HEK293T (cell line): ENCODE measurements at regions of chr19 and their contacts with region 1.

Region 1: GRCh38 chr19:39435499-39436349 is at the start of gene RPS16:
- DNase-seq: peak; percentile 96

Region 2: DNA sequence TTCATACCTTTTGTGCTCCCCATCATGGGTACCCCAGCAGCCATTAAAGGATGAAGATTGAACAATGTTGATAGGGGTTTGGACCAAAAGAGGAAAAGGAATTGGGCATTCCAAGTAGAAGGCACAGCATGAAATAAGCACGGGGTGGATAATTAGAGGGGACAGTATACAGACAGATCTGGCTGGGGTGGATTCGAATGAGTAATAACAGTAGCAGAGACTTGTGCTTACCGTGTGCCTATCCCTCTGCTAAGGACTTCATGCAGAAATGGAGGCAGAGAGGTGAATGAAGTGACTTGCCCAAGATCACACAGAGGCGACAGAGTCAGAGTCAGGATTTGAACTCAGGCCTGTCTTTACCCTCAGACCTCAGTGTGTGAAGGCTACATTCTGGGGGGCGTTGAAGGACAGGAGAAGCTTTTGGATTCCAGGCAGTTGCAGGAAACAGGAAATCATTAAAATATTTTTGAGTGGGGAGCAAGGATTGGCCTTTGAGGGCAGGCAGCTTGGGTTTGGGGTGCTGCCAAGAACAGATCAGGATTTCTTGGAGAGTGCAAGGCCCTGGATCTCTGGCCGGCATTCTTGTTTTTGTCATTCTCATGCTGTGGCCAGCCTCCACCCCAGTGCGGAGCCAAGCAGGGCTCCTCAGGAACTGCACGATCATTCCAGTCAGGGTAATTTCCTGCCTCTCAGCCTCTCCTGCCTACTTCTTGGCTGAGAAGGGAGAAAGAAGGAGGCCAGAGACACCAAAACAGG is 63.5 kb before region 1 on chr19:
- CTCF ChIA-PET with region 1: no interaction called
- POLR2A ChIA-PET with region 1: no interaction called
- DNase-seq: no peak

Region 3: DNA sequence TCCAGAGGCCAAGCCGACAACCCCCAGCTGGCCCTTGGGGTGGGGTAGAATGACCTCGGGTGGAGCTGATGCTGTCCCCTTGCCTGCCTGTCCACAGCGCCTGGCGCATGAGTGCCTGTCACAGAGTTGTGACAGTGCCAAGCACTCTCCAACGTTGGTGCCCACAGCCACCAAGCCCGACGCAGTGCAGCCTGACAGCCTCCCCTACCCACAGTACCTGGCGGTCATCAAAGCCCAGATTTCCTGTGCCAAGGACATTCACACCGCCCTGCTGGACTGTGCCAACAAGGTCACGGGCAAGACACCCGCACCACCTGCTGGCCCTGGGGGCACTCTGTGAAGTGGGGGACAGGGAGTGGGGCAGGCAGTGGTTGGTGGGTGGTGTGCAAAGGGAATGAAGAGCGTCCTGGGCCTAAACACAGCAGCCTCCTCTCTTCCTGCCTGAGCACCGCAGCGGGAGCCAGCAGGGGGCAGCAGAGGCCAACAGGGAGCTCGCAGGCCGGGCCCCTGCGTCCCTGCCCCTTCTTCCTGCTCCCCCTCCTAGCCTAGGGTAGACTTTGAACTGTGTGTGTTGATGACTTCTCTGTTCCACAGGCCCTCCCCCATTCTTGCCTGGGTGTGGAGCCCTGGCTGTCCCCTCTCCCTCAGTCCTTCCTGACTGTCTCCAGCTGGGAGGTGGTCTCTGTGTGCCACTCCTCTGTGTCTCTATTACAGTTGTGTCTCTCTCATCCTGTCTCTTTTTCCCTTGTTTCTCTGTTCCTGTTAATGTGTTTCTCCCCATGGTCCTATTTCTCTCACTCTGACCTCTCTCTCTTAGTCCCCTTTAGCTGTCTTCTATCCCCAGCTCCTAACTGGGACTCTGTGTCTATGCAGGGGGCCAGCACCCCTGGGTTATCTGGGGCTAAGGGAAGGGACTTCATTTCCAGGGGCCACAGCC is 38.1 kb before region 1 on chr19:
- CTCF ChIA-PET with region 1: interaction called, 3 read pairs
- POLR2A ChIA-PET with region 1: interaction called, 54 read pairs
- DNase-seq: peak; percentile 84

Region 4: DNA sequence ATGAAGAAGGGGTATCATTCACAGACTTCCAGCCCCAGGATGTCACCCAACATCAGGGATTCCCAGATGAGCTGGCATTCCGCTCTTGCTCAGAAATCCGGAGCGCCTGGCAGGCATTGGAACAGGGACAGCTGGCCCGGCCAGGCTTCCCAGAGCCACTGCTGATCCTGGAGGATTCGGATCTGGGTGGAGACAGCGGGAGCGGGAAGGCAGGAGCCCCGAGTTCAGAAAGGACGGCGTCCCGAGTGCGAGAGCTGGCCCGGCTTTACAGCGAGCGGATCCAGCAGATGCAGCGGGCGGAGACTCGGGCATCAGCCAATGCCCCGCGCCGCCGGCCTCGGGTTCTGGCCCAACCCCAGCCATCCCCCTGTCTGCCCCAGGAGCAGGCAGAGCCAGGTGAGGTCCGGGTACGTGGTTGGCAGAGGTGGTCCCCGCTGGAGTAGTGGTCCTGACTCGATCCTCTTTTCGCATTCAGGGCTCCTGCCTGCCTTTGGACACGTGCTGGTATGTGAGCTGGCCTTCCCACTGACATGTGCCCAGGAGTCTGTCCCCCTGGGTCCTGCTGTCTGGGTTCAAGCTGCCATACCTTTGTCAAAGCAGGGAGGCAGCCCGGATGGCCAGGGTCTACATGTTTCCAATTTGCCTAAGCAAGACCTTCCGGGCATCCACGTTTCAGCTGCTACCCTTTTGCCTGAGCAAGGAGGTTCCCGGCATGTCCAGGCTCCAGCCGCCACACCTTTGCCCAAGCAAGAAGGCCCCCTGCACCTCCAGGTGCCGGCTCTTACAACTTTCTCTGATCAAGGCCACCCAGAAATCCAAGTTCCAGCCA is 12.3 kb before region 1 on chr19:
- CTCF ChIA-PET with region 1: interaction called, 5 read pairs
- POLR2A ChIA-PET with region 1: interaction called, 78 read pairs
- DNase-seq: no peak

Region 5: GRCh38 chr19:39480337-39481228 is 44.9 kb after region 1 on chr19 and contains the start of gene TIMM50:
- CTCF ChIA-PET with region 1: no interaction called
- POLR2A ChIA-PET with region 1: interaction called, 12 read pairs
- DNase-seq: peak; percentile 95

Region 6: DNA sequence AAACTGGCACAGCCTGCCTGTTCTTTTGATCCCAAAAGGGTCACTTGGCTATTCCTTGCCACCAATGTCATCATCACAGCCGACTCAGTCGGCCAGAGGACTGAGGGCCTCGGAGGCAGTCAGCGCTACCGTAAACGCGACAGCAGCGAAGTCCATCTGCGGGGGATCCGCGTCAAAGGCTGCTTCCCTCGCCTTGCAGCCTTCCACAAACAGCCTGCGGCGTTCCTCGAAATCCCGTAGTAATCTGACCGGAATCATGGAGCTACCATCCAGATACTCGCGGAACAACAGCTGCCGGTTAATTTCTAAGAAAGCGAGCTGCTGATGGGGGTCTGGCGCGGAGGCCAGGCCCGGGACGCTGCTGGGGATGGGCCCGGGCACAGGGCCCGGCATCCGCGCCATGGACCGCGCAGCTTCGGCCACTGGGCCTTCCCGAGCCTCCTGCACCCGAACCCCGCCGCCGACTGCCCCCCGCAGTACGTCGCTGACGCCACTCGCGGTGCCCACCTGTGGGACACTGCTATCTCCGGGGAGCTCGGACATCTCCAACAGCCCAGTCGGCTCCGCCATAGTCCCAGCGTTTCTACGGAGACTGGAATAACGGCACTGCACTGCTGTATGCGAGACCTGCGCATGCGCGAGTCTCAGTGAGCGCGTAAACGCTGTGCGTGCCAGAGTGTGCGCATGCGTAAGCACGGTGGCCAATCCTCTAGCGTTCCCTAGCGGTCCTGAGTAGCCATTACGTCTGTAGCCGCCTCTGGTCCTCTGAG is 96.7 kb after region 1 on chr19 and contains the start of gene EID2B:
- CTCF ChIA-PET with region 1: interaction called, 7 read pairs
- POLR2A ChIA-PET with region 1: interaction called, 25 read pairs
- DNase-seq: peak; percentile 96

Region 7: GRCh38 chr19:39641773-39642172 is 206.0 kb after region 1 on chr19:
- CTCF ChIA-PET with region 1: no interaction called
- POLR2A ChIA-PET with region 1: no interaction called
- DNase-seq: no peak